HEK293T (cell line): ENCODE measurements at regions of chr2 and their contacts with region 1.

Region 1: DNA sequence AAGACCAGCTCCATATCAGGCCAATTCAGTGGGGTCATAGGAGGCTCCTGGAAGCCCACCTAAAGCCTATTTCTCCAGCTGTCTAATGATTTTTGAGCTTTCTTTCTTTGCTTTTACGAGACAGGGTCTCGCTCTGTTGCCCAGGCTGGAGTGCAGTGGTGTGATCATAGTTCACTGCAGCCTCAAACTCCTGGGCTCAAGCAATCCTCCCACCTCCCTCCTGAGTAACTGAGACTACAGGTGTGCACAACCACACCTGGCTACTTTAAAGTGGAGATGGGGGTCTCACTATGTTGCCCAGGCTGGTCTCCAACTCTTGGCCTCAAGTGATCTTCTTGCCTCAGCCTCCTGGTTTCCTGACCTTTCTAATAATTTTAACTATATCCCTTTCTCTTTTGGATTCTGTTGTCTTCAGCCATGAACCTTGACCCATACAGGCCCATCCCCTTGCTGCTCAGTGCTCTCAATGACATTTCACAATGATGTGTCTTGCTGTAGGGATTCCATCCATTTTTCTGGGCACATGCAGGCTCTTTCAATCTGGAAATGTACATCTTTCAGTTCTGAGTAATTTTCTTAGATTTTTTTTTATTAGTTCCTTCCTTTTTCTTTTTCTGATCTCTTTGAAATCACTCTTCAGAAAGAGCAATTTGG is 29.7 kb downstream of the GNLY start:
- DNase-seq: no peak

Region 2: DNA sequence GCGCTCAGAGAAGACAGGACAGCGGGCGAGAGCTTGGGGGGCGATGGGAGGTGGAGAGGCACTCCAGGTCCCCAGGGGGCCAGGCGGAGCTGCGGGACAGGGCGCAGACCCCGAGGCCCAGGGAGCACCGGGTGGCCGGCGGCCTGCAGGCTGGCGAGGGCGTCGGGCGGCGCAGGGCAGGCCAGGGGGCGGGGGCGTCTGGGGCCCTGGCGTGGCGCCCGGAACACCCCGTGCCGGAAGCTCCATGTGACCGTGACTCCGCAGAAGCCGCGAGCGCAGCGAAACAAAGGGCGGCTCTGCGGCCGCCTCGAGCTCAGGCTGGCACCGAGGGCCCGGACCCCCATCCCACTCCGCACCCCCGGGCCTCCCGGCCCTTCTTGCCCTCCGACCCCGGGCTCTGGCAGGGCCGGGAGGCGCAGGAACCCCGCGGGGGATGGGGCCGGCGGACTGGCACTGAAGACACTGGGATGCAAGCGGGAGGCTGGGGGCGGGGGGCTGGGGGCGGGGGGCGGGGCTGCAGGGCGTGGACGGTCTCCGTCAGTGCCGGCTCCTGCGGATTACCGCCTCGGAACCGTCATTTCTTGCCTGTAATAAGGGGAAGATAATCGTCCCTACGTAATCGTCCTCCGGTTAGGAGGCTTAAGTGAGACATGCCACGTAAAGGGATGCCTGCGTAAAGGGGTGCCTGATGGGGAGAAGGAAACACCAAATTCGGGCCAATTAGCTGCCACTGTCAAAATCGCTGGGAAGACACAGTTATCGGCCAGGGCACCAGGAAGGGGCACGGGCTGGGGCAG is 286.1 kb before region 1 on chr2:
- CTCF ChIA-PET with region 1: no interaction called
- POLR2A ChIA-PET with region 1: no interaction called
- DNase-seq: peak; percentile 62

Region 3: GRCh38 chr2:86118133-86118532 is 394.3 kb after region 1 on chr2:
- CTCF ChIA-PET with region 1: interaction called, 11 read pairs
- POLR2A ChIA-PET with region 1: no interaction called
- DNase-seq: no peak